K562 (cell line): ENCODE measurements at regions of chr7 and their contacts with region 1.

Region 1: DNA sequence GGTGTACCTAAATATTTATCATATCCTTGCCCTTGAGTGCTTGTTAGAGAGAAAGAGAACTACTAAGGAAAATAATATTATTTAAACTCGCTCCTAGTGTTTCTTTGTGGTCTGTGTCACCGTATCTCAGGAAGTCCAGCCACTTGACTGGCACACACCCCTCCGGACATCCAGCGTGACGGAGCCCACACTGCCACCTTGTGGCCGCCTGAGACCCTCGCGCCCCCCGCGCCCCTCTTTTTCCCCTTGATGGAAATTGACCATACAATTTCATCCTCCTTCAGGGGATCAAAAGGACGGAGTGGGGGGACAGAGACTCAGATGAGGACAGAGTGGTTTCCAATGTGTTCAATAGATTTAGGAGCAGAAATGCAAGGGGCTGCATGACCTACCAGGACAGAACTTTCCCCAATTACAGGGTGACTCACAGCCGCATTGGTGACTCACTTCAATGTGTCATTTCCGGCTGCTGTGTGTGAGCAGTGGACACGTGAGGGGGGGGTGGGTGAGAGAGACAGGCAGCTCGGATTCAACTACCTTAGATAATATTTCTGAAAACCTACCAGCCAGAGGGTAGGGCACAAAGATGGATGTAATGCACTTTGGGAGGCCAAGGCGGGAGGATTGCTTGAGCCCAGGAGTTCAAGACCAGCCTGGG is 11.4 kb downstream of the SERPINE1 start:
- DNase-seq: peak; percentile 91 to 98 (median 94)
- ATAC-seq: peak; percentile 97
- H3K4me3 ChIP-seq: peak overlapping the region; percentile 33
- H3K27ac ChIP-seq: peak overlapping the region; percentile 98
- H3K4me1 ChIP-seq: peaks cover 24 to 45% of the 10 kb centered on the region in 2 experiments
- H3K27me3 ChIP-seq: no peaks in the 10 kb centered on the region
- CTCF ChIP-seq: peak; percentile 86 to 98 (median 89)
- EP300 ChIP-seq: peak; percentile 89
- POLR2A ChIP-seq: peak; percentile 83
- RAD21 ChIP-seq: peak; percentile 89 to 94

Region 2: GRCh38 chr7:100837099-100837836 is 301.1 kb before region 1 on chr7:
- CTCF ChIA-PET with region 1: no interaction called
- POLR2A ChIA-PET with region 1: no interaction called
- in situ Hi-C with region 1: no loop called
- intact Hi-C with region 1: no loop called
- DNase-seq: peak; percentile 84 to 96 (median 87)
- ATAC-seq: peak; percentile 96
- H3K4me3 ChIP-seq: peak overlapping the region; percentile 21
- H3K27ac ChIP-seq: peak overlapping the region; percentile 80
- H3K4me1 ChIP-seq: peaks cover 12 to 48% of the 10 kb centered on the region in 2 experiments; a peak in 3 of 5 replicates
- H3K27me3 ChIP-seq: no peaks in the 10 kb centered on the region
- CTCF ChIP-seq: no peak
- EP300 ChIP-seq: no peak
- POLR2A ChIP-seq: peak; percentile 79
- RAD21 ChIP-seq: no peak

Region 3: GRCh38 chr7:100896732-100897608 is 241.4 kb before region 1 on chr7:
- CTCF ChIA-PET with region 1: interaction called, 4 read pairs
- POLR2A ChIA-PET with region 1: no interaction called
- in situ Hi-C with region 1: no loop called
- intact Hi-C with region 1: loop called (anchors 2 kb)
- DNase-seq: peak; percentile 77 to 80 (median 78)
- ATAC-seq: peak; percentile 53
- H3K4me3 ChIP-seq: peak overlapping the region; percentile 39
- H3K27ac ChIP-seq: peak overlapping the region; percentile 48
- H3K4me1 ChIP-seq: peaks cover 27 to 71% of the 10 kb centered on the region in 2 experiments
- H3K27me3 ChIP-seq: no peaks in the 10 kb centered on the region
- CTCF ChIP-seq: peak; percentile 79 to 94 (median 84)
- EP300 ChIP-seq: no peak
- POLR2A ChIP-seq: no peak
- RAD21 ChIP-seq: peak; percentile 74 to 77

Region 4: DNA sequence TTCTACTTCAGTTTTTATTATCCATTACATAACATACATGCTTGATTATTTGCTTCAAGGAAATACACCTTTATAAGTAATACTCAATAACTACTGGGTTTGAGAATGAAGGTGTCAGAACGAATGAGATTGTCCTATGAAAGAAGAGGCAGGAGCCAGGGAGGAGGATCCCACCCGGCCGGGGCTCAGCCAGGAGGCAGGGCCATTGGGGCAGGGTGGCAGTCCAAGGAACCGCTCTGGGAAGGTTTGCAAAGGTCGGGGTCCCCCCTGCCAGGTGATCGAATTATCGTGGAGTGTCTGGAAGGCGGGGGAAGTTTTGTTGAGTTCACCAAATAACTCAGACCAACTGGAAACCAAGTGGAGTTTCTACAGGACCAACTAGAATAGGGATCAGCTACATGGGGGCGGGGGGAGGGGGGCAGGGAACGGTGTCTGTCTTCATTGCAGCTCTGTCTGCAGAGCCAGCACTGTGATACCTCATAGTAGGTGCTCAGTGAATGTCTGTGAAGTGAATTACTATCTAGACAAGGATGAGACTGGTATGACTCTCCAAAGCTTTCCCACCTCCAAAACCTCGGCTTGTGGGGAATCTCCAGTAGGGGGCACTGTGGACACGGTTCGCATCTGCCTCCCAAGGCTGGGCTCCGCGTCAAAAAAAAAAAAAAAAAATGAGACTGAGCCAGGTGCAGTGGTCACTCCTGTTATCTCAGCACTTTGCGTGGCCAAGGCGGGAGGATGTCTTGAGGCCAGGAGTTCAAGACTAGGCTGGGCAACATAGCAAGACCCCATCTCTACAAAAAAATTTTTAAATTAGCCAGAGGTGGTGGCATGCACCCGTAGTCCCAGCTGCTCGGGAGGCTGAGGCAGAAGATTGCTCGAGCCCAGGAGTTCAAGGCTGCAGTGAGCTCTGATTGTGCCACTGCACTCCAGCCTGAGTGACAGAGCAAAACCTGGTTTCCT is 43.6 kb before region 1 on chr7:
- CTCF ChIA-PET with region 1: interaction called, 4 read pairs
- POLR2A ChIA-PET with region 1: interaction called, 3 read pairs
- in situ Hi-C with region 1: no loop called
- intact Hi-C with region 1: loop called (anchors 1 kb)
- DNase-seq: peak; percentile 75 to 88 (median 77)
- ATAC-seq: peak; percentile 84
- H3K4me3 ChIP-seq: no peak overlapping the region
- H3K27ac ChIP-seq: no peak overlapping the region
- H3K4me1 ChIP-seq: peaks cover 29 to 30% of the 10 kb centered on the region in 2 experiments; a peak in 4 of 5 replicates
- H3K27me3 ChIP-seq: no peaks in the 10 kb centered on the region
- CTCF ChIP-seq: peak; percentile 77 to 91 (median 88)
- EP300 ChIP-seq: peak; percentile 22; the same call in 1 of the 2 replicates
- POLR2A ChIP-seq: no peak
- RAD21 ChIP-seq: peak; percentile 43 to 64

Region 5: GRCh38 chr7:101099969-101100781 is 38.2 kb before region 1 on chr7:
- CTCF ChIA-PET with region 1: interaction called, 4 read pairs
- POLR2A ChIA-PET with region 1: interaction called, 6 read pairs
- in situ Hi-C with region 1: no loop called
- intact Hi-C with region 1: loop called (anchors 1 kb)
- DNase-seq: peak; percentile 96 to 99 (median 98)
- ATAC-seq: peak; percentile 95
- H3K4me3 ChIP-seq: no peak overlapping the region
- H3K27ac ChIP-seq: peak overlapping the region; percentile 81
- H3K4me1 ChIP-seq: peaks cover 47 to 57% of the 10 kb centered on the region in 2 experiments
- H3K27me3 ChIP-seq: no peaks in the 10 kb centered on the region
- CTCF ChIP-seq: 0 out of 6 replicates have a peak, but pooled peaks of 2 of the 3 experiments have one; percentile 6 to 12
- EP300 ChIP-seq: peak; percentile 92
- POLR2A ChIP-seq: peak; percentile 76
- RAD21 ChIP-seq: no peak; a peak in 1 of 4 replicates

Region 6: DNA sequence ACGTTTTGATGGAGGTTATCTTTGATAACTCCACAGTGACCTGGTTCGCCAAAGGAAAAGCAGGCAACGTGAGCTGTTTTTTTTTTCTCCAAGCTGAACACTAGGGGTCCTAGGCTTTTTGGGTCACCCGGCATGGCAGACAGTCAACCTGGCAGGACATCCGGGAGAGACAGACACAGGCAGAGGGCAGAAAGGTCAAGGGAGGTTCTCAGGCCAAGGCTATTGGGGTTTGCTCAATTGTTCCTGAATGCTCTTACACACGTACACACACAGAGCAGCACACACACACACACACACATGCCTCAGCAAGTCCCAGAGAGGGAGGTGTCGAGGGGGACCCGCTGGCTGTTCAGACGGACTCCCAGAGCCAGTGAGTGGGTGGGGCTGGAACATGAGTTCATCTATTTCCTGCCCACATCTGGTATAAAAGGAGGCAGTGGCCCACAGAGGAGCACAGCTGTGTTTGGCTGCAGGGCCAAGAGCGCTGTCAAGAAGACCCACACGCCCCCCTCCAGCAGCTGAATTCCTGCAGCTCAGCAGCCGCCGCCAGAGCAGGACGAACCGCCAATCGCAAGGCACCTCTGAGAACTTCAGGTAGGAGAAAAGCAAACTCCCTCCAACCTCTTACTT is 11.6 kb before region 1 on chr7 and contains the start of gene SERPINE1:
- CTCF ChIA-PET with region 1: interaction called, 3 read pairs
- POLR2A ChIA-PET with region 1: interaction called, 13 read pairs
- in situ Hi-C with region 1: no loop called
- intact Hi-C with region 1: no loop called
- DNase-seq: peak; percentile 68 to 79 (median 71)
- ATAC-seq: peak; percentile 70
- H3K4me3 ChIP-seq: no peak within 1 kb of the TSS
- H3K27ac ChIP-seq: no peak within 1 kb of the TSS; the same call in 2 of the 3 replicates
- H3K4me1 ChIP-seq: peaks cover 29 to 41% of the 10 kb centered on the region in 2 experiments
- H3K27me3 ChIP-seq: no peaks in the 10 kb centered on the region
- CTCF ChIP-seq: peak; percentile 35 to 58 (median 35)
- EP300 ChIP-seq: no peak
- POLR2A ChIP-seq: peak; percentile 49; the same call in 1 of the 2 replicates
- RAD21 ChIP-seq: no peak
- polyA plus RNA-seq, gene SERPINE1: 0.89 to 1.6 TPM

Region 7: GRCh38 chr7:101165075-101165957 is 27.0 kb after region 1 on chr7 and contains the start of gene VGF:
- CTCF ChIA-PET with region 1: interaction called, 20 read pairs
- POLR2A ChIA-PET with region 1: no interaction called
- in situ Hi-C with region 1: no loop called
- intact Hi-C with region 1: no loop called
- DNase-seq: peak; percentile 97 to 99 (median 98)
- ATAC-seq: peak; percentile 88
- H3K4me3 ChIP-seq: peak within 1 kb of the TSS; percentile 35
- H3K27ac ChIP-seq: no peak within 1 kb of the TSS
- H3K4me1 ChIP-seq: peaks cover 36 to 67% of the 10 kb centered on the region in 2 experiments
- H3K27me3 ChIP-seq: peaks cover 5 to 20% of the 10 kb centered on the region in 2 experiments; a peak in 2 of 5 replicates
- CTCF ChIP-seq: no peak
- EP300 ChIP-seq: no peak
- POLR2A ChIP-seq: no peak; the same call in 1 of the 2 replicates
- RAD21 ChIP-seq: no peak
- polyA plus RNA-seq, gene VGF: 0.03 to 0.08 TPM

Region 8: GRCh38 chr7:101201695-101202604 is 63.6 kb after region 1 on chr7:
- CTCF ChIA-PET with region 1: no interaction called
- POLR2A ChIA-PET with region 1: no interaction called
- in situ Hi-C with region 1: no loop called
- intact Hi-C with region 1: no loop called
- DNase-seq: peak in 1 of 4 experiments; percentile 18
- ATAC-seq: no peak
- H3K4me3 ChIP-seq: no peak overlapping the region
- H3K27ac ChIP-seq: no peak overlapping the region
- H3K4me1 ChIP-seq: peaks cover 9 to 37% of the 10 kb centered on the region in 2 experiments
- H3K27me3 ChIP-seq: peaks cover 0 to 7% of the 10 kb centered on the region in 2 experiments; a peak in 1 of 5 replicates
- CTCF ChIP-seq: no peak
- EP300 ChIP-seq: no peak
- POLR2A ChIP-seq: no peak
- RAD21 ChIP-seq: no peak

Region 9: GRCh38 chr7:101273206-101273605 is 134.9 kb after region 1 on chr7:
- CTCF ChIA-PET with region 1: no interaction called
- POLR2A ChIA-PET with region 1: no interaction called
- in situ Hi-C with region 1: no loop called
- intact Hi-C with region 1: no loop called
- DNase-seq: no peak
- ATAC-seq: no peak
- H3K4me3 ChIP-seq: no peak overlapping the region
- H3K27ac ChIP-seq: no peak overlapping the region
- H3K4me1 ChIP-seq: no peaks in the 10 kb centered on the region; a peak in 1 of 5 replicates
- H3K27me3 ChIP-seq: peaks cover 35 to 54% of the 10 kb centered on the region in 2 experiments
- CTCF ChIP-seq: no peak
- EP300 ChIP-seq: no peak
- POLR2A ChIP-seq: no peak
- RAD21 ChIP-seq: no peak

Region 10: DNA sequence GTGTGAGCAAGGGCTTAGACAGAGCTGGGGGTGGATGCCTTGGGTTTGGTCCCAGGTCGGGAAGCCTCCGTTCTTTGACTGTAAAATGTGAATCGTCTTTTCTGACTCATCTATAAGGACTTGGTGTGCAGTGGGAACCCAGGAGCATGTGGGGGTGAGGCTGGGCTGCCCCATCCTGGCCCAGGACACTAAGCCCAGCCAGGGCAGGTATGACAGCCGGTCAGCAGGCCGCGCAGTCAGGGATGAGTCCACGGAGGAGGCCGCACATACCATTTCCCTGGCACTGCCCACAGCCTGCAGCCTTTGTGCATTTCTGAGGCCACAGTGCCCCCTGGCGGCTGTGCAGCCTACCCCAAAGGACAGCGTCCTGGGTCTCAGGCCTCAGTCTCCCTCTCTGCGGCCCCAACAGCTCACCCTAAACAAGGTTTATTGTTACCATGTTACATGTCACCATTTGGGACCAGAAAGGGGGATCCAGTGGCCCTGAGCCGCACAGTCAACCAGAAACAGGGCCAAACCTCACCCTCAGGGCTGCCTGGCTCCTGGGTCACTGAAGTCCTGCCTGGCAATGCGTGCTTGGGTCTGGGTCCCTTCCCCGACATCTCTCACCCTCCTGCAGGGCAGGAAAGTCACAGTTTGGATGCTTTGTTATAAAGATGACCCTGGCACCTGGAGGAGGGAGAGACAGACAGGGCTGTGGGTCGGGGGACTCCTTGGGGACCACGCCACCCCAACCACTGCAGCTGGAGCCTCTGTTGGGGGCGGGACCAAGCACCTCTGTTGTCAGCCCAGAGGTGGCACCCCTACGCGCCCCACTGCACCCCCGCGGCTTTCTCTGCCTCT is 1134.0 kb after region 1 on chr7:
- CTCF ChIA-PET with region 1: no interaction called
- POLR2A ChIA-PET with region 1: no interaction called
- in situ Hi-C with region 1: no loop called
- intact Hi-C with region 1: no loop called
- DNase-seq: peak; percentile 80 to 87 (median 84)
- ATAC-seq: peak; percentile 85
- H3K4me3 ChIP-seq: no peak overlapping the region
- H3K27ac ChIP-seq: no peak overlapping the region
- H3K4me1 ChIP-seq: peaks cover 15 to 54% of the 10 kb centered on the region in 2 experiments; a peak in 4 of 5 replicates
- H3K27me3 ChIP-seq: peaks cover 0 to 10% of the 10 kb centered on the region in 2 experiments; a peak in 2 of 5 replicates
- CTCF ChIP-seq: peak; percentile 91 to 98 (median 92)
- EP300 ChIP-seq: peak; percentile 25; the same call in 1 of the 2 replicates
- POLR2A ChIP-seq: no peak
- RAD21 ChIP-seq: peak; percentile 96 to 98